PC-9 (cell line): ENCODE measurements at regions of chr7 and their contacts with region 1.

Region 1: GRCh38 chr7:40918701-40919271 is 784.0 kb downstream of the SUGCT start:
- DNase-seq: peak; percentile 55 to 91
- H3K4me3 ChIP-seq: no peak overlapping the region
- H3K27ac ChIP-seq: peak overlapping the region; percentile 85
- H3K4me1 ChIP-seq: peaks cover 69% of the 10 kb centered on the region
- H3K27me3 ChIP-seq: no peaks in the 10 kb centered on the region
- CTCF ChIP-seq: no peak

Region 2: GRCh38 chr7:40437498-40437897 is 481.3 kb before region 1 on chr7:
- CTCF ChIA-PET with region 1: no interaction called
- POLR2A ChIA-PET with region 1: no interaction called
- intact Hi-C with region 1: loop called (anchors 1 kb)
- DNase-seq: peak; percentile 56 to 73
- H3K4me3 ChIP-seq: no peak overlapping the region
- H3K27ac ChIP-seq: peak overlapping the region; percentile 6; the same call in 1 of the 2 replicates
- H3K4me1 ChIP-seq: peaks cover 11% of the 10 kb centered on the region; the same call in 1 of the 2 replicates
- H3K27me3 ChIP-seq: no peaks in the 10 kb centered on the region
- CTCF ChIP-seq: no peak

Region 3: GRCh38 chr7:40833888-40834234 is 84.9 kb before region 1 on chr7:
- CTCF ChIA-PET with region 1: no interaction called
- POLR2A ChIA-PET with region 1: no interaction called
- intact Hi-C with region 1: loop called (anchors 5 kb)
- DNase-seq: no peak
- H3K4me3 ChIP-seq: no peak overlapping the region
- H3K27ac ChIP-seq: no peak overlapping the region
- H3K4me1 ChIP-seq: no peaks in the 10 kb centered on the region
- H3K27me3 ChIP-seq: no peaks in the 10 kb centered on the region
- CTCF ChIP-seq: peak; percentile 60

Region 4: GRCh38 chr7:40977535-40977934 is 58.7 kb after region 1 on chr7:
- CTCF ChIA-PET with region 1: no interaction called
- POLR2A ChIA-PET with region 1: interaction called, 5 read pairs
- intact Hi-C with region 1: loop called (anchors 1 kb)
- DNase-seq: peak; percentile 54 to 100
- H3K4me3 ChIP-seq: no peak overlapping the region
- H3K27ac ChIP-seq: peak overlapping the region; percentile 88
- H3K4me1 ChIP-seq: peaks cover 36% of the 10 kb centered on the region
- H3K27me3 ChIP-seq: no peaks in the 10 kb centered on the region
- CTCF ChIP-seq: no peak

Region 5: DNA sequence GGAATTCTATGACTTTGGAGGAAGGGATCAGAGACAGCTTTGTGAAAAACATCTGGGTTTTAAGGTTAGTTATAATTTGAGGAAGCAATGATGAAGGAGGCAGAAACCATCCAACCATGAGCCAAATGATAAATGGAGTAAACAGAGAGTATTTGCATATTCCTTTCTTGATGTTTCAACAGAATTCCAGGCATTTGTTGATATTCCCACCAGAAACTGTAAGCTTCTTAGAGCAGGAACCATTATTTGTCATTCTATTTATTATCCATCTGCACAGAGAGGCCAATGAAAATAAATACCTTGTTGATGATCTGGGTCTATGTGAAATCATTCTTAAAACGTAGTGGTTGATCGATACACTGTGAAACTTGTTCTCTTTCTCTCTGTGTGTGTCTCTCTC is 68.8 kb after region 1 on chr7:
- CTCF ChIA-PET with region 1: no interaction called
- POLR2A ChIA-PET with region 1: no interaction called
- intact Hi-C with region 1: no loop called
- DNase-seq: no peak
- H3K4me3 ChIP-seq: no peak overlapping the region
- H3K27ac ChIP-seq: peak overlapping the region; percentile 63; the same call in 1 of the 2 replicates
- H3K4me1 ChIP-seq: peaks cover 20% of the 10 kb centered on the region
- H3K27me3 ChIP-seq: no peaks in the 10 kb centered on the region
- CTCF ChIP-seq: no peak

Region 6: DNA sequence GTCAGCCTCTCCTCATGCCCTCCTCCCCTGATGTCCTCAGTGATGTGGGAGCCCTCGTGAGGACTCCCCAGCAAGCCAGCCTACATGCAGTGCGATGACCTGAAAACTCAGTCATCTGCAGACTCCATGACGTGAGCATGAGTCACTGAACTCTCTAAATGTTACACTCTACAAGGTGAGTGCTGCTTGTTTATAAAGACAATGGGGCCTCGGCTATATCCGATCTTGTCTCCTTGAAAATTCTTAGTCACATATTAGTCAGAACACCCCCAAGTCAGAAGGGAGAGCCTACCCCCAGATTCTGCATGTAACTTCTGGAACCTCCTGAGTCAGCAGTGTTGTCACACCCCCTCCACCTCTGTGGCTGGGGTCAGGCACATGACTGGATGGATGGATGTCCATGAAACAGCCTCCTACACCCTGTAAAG is 110.3 kb after region 1 on chr7:
- CTCF ChIA-PET with region 1: no interaction called
- POLR2A ChIA-PET with region 1: no interaction called
- intact Hi-C with region 1: loop called (anchors 1 kb)
- DNase-seq: peak; percentile 74 to 84
- H3K4me3 ChIP-seq: no peak overlapping the region
- H3K27ac ChIP-seq: peak overlapping the region; percentile 39
- H3K4me1 ChIP-seq: peaks cover 22% of the 10 kb centered on the region
- H3K27me3 ChIP-seq: no peaks in the 10 kb centered on the region
- CTCF ChIP-seq: no peak

Region 7: DNA sequence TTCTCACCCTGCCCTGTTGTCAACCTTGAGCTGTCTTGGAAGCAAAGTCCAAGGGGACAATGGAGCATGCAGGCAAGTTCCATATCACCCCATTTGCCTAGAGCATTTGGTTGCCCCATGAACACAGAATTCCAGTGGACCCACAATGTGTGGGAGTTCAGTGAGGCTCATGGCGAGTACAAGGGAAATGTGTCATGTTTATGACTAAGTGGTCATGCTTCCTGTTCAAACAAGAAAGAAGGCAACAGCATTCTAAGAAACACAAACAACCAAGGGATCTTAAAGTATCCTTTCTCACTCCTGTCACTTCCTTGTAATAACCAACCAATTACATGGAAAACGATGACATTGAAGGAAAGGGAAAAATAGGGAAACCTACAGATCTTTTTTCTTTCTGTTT is 271.1 kb after region 1 on chr7:
- CTCF ChIA-PET with region 1: no interaction called
- POLR2A ChIA-PET with region 1: no interaction called
- intact Hi-C with region 1: loop called (anchors 1 kb)
- DNase-seq: peak; percentile 61 to 99
- H3K4me3 ChIP-seq: no peak overlapping the region
- H3K27ac ChIP-seq: peak overlapping the region; percentile 93
- H3K4me1 ChIP-seq: peaks cover 46% of the 10 kb centered on the region
- H3K27me3 ChIP-seq: no peaks in the 10 kb centered on the region
- CTCF ChIP-seq: no peak

Region 8: DNA sequence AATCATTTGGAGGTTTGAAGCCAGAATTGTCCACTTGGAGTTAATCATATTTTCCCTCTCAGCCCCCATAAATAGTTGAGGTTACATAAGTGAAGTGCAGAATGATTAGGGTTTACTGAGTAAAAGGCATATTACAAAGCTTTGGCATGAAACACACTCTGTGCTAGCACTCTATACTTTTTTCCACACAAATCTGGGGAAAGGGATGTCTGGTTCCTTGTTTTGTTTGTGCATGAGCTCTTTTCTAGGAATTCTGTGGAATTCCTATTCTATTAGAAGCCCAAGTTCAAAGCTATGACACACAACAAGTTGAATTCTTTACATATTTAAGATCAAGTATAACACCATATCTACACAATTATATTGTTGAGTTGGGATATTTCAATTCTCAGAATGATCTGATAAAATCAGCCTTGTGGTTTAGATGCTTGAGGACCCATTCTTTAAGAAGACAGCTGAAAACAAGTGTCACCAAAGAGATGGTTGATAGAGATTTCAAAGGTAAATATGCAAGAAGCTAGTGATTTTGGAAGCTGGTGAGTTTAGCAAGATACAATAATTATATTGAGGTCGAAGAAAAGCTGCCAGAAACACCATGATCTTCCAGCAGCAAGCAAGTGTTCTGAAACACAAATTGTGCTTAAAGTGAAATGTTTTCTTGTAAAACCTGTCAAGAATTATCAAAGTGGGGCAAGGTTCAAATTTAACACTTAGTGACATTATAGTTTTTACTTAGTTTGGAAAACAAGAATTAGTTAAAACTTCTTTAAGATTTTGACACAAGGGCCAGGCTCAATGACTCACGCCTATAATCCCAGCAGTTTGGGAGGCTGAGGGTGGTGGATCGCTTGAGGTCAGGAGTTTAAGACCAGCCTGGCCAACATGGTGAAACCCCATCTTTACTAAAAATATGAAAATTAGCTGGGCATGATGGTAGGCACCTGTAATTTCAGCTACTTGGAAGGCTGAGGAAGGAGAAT is 661.5 kb after region 1 on chr7:
- CTCF ChIA-PET with region 1: no interaction called
- POLR2A ChIA-PET with region 1: no interaction called
- intact Hi-C with region 1: loop called (anchors 1 kb)
- DNase-seq: peak; percentile 40 to 99
- H3K4me3 ChIP-seq: no peak overlapping the region
- H3K27ac ChIP-seq: peak overlapping the region; percentile 74
- H3K4me1 ChIP-seq: peaks cover 35% of the 10 kb centered on the region
- H3K27me3 ChIP-seq: no peaks in the 10 kb centered on the region
- CTCF ChIP-seq: no peak